HepG2 (cell line): ENCODE measurements at regions of chr16 and their contacts with region 1.

Region 1: DNA sequence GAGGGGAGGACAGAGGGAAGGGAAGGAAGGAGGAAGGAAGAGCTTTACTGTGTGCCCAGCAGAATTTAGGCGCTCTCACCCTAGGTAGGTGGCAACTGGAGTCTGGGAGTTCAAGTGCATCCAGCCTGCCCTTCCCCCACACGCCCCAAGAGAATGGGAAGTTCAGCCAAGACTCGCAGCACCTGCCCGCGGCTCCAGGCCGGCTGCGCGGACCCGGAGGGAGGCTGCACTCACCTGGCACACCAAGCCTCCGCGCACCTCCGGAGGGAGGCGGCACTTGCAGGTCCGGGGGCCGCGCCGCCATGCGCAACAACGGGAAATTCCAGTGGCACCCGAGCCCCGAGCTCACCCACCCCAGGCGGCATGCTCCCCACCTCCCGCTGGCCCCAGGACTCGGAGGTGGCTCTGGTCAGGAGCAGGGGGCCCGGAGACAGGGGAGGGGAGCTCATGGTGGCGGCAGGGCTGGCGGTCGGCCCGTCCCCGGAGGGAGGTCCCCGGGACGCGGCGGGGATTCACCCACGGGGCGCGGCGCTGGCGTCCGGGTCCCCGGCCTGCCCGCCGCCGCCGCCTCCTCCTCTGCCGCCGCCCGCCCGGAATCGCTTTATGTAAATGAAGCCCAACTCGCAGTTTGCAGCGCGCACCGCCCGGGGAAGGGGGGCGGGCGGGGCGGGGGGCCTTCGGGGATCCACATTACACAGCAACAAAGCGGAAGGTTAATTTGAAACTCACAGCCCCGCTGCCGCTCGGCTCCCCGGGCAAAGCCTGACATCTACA is at the start of gene ZFHX3:
- DNase-seq: peak; percentile 76
- ATAC-seq: peak; percentile 63
- H3K4me3 ChIP-seq: peak within 1 kb of the TSS; percentile 69 to 93 (median 89)
- H3K27ac ChIP-seq: peak within 1 kb of the TSS; percentile 89
- H3K4me1 ChIP-seq: peaks cover 87% of the 10 kb centered on the region
- H3K27me3 ChIP-seq: no peaks in the 10 kb centered on the region; a peak in 2 of 5 replicates
- CTCF ChIP-seq: peak; percentile 59
- EP300 ChIP-seq: no peak
- POLR2A ChIP-seq: peak in 1 of 2 experiments; percentile 21; a peak in 2 of 4 replicates
- RAD21 ChIP-seq: peak; percentile 47
- total RNA-seq, gene ZFHX3: 6.0 and 12.3 TPM in 2 replicates

Region 2: DNA sequence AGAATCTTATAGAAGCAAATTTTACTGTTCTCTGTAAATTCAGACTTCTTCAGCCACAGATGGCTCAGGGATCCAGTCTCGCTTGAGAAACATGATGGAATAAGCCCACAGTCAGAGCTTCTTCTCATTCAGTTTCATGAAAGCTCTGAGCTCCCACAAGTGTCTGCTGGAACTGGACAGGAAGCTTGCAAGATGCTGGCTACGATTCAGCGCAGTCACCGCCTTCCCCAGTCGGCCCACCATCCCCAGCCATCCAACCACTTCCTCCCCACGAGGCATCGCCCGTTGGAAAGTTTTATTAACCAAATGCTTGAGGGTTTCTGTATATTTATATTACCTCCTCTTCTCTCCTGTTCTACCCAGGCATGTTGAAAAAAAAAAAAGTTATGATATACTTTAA is 171.5 kb before region 1 on chr16:
- CTCF ChIA-PET with region 1: no interaction called
- POLR2A ChIA-PET with region 1: interaction called, 8 read pairs
- in situ Hi-C with region 1: no loop called
- intact Hi-C with region 1: loop called (anchors 5 kb)
- DNase-seq: no peak
- ATAC-seq: no peak
- H3K4me3 ChIP-seq: no peak overlapping the region
- H3K27ac ChIP-seq: peak overlapping the region; percentile 86
- H3K4me1 ChIP-seq: peaks cover 68% of the 10 kb centered on the region
- H3K27me3 ChIP-seq: no peaks in the 10 kb centered on the region
- CTCF ChIP-seq: no peak
- EP300 ChIP-seq: no peak
- POLR2A ChIP-seq: no peak
- RAD21 ChIP-seq: no peak

Region 3: GRCh38 chr16:72947379-72948237 is 100.1 kb before region 1 on chr16:
- CTCF ChIA-PET with region 1: no interaction called
- POLR2A ChIA-PET with region 1: no interaction called
- in situ Hi-C with region 1: loop called (anchors 5 kb)
- intact Hi-C with region 1: no loop called
- DNase-seq: peak; percentile 79
- ATAC-seq: peak; percentile 99
- H3K4me3 ChIP-seq: no peak overlapping the region
- H3K27ac ChIP-seq: peak overlapping the region; percentile 40
- H3K4me1 ChIP-seq: peaks cover 33% of the 10 kb centered on the region
- H3K27me3 ChIP-seq: no peaks in the 10 kb centered on the region
- CTCF ChIP-seq: peak; percentile 62
- EP300 ChIP-seq: no peak
- POLR2A ChIP-seq: no peak
- RAD21 ChIP-seq: peak; percentile 77

Region 4: DNA sequence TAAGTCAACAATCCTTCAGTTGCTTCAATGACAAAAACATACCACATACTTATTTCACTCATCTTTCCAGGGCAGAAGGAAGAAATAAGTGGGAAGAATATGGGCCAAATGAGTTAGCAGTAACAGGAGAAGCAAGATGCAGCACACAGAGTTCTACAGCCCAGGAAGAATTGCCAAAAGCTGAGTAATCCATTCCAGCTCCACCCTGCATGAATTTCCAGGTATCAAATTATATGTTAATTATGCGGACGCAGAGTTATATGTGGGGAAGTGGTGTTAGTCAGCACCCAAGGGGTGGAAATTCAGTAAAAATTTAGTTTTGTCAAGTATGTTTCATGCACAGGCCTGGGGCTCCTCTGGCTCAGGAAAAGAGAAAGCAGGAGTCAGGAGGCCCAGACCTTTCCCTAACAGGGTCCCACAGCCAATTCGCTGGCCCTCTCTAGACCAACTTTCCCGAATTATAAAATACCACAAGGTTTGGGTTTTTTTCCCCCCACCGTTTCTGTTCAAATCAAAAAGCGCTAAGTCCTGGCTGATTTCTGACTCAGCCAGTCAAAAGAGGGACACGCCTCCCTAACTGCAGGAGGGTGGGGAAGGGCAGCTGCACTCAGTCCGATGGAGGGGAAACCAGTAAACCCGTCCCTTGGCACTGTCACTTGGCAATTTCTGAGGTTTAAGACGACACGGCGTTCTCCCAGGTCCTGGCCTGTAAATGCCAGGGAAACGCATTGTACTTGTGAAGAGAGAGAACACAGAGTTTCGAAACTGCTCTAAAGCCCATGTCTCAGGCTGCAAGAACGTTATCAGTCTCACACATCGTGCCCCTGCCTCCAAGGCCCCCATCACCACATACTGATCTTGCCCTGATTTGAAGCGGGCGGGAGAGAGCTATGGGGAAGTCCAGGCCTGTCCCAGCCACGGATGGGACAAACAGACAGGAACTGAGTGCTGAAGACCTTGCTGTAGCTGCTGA is 57.8 kb before region 1 on chr16:
- CTCF ChIA-PET with region 1: no interaction called
- POLR2A ChIA-PET with region 1: no interaction called
- in situ Hi-C with region 1: no loop called
- intact Hi-C with region 1: no loop called
- DNase-seq: no peak
- ATAC-seq: peak; percentile 18; the same call in 1 of the 3 replicates
- H3K4me3 ChIP-seq: no peak overlapping the region
- H3K27ac ChIP-seq: no peak overlapping the region
- H3K4me1 ChIP-seq: peaks cover 67% of the 10 kb centered on the region
- H3K27me3 ChIP-seq: no peaks in the 10 kb centered on the region
- CTCF ChIP-seq: no peak
- EP300 ChIP-seq: no peak
- POLR2A ChIP-seq: no peak
- RAD21 ChIP-seq: no peak

Region 5: GRCh38 chr16:73020362-73020884 is 27.3 kb before region 1 on chr16:
- CTCF ChIA-PET with region 1: no interaction called
- POLR2A ChIA-PET with region 1: interaction called, 6 read pairs
- in situ Hi-C with region 1: no loop called
- intact Hi-C with region 1: loop called (anchors 2 kb)
- DNase-seq: peak; percentile 92
- ATAC-seq: peak; percentile 78
- H3K4me3 ChIP-seq: peak overlapping the region in 2 of 3 experiments; percentile 18 to 24; a peak in 1 of 6 replicates
- H3K27ac ChIP-seq: peak overlapping the region; percentile 70
- H3K4me1 ChIP-seq: peaks cover 94% of the 10 kb centered on the region
- H3K27me3 ChIP-seq: no peaks in the 10 kb centered on the region
- CTCF ChIP-seq: no peak
- EP300 ChIP-seq: peak; percentile 69 to 87; a peak in 3 of 4 replicates
- POLR2A ChIP-seq: peak in 1 of 2 experiments; percentile 32; a peak in 1 of 4 replicates
- RAD21 ChIP-seq: no peak; the same call in 1 of the 2 replicates

Region 6: GRCh38 chr16:73058221-73058615 is 10.5 kb after region 1 on chr16:
- CTCF ChIA-PET with region 1: no interaction called
- POLR2A ChIA-PET with region 1: interaction called, 11 read pairs
- in situ Hi-C with region 1: no loop called
- intact Hi-C with region 1: loop called (anchors 1 kb)
- DNase-seq: no peak
- ATAC-seq: no peak
- H3K4me3 ChIP-seq: peak overlapping the region; percentile 75 to 78 (median 77); a peak in 4 of 6 replicates
- H3K27ac ChIP-seq: peak overlapping the region; percentile 57
- H3K4me1 ChIP-seq: peaks cover 53% of the 10 kb centered on the region
- H3K27me3 ChIP-seq: no peaks in the 10 kb centered on the region
- CTCF ChIP-seq: no peak
- EP300 ChIP-seq: no peak
- POLR2A ChIP-seq: no peak
- RAD21 ChIP-seq: peak; percentile 26; the same call in 1 of the 2 replicates